GM12878 (cell line): ENCODE measurements at regions of chr7 and their contacts with region 1.

Region 1: DNA sequence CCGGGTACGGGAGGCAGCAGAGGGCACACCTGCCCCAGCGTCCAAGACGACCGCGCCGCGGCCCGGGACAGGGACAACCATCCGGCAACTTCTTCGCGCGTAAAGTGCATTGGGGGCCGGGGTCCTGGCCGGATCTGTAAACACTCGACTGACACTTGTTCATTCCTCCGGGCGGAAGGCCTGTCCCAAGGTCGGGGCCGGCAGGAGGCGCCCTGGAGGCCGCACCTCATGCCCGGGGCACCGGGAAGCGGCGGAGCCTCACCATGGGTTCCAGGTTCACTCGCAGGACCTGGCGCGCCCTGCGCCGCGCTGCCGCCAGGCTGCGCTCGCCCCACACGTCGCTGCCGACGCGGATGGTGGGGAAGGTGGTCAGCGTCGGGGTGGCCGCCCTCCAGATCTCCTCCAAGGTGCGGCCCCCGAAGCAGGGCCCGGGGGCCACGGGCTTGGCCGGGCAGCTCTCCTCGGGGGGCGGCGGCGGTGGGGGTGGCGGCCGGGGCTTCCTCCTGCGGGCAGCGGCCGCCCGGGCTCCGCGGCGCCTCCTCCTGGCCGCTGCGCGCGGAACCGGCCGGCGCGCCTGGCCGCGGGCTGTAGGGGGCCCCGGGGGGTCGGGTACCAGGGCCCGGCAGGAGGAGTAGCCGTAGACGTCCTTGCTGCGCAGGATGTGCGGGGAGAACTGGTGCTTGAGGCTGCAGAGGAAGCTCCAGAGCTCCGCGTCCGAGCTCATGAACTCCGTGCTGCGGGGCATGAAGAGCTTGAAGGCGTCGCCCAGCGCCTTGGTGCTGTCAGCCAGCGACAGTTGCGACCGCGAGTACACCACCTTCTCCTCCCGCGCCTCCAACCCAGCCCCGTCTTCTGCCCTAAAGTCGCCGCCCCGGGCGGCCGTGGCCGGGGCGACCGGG is 746 bp downstream of the CCDC71L start:
- DNase-seq: peak; percentile 51
- ATAC-seq: peak; percentile 79
- H3K4me3 ChIP-seq: peak overlapping the region; percentile 96
- H3K27ac ChIP-seq: peak overlapping the region; percentile 72
- H3K4me1 ChIP-seq: peaks cover 9% of the 10 kb centered on the region; the same call in 1 of the 2 replicates
- H3K27me3 ChIP-seq: no peaks in the 10 kb centered on the region; a peak in 1 of 4 replicates
- CTCF ChIP-seq: peak; percentile 78 to 94 (median 89)
- EP300 ChIP-seq: 0 out of 4 replicates have a peak, but pooled peaks of 1 of the 2 experiments have one; percentile 37
- POLR2A ChIP-seq: peak; percentile 78
- RAD21 ChIP-seq: peak; percentile 76

Region 2: DNA sequence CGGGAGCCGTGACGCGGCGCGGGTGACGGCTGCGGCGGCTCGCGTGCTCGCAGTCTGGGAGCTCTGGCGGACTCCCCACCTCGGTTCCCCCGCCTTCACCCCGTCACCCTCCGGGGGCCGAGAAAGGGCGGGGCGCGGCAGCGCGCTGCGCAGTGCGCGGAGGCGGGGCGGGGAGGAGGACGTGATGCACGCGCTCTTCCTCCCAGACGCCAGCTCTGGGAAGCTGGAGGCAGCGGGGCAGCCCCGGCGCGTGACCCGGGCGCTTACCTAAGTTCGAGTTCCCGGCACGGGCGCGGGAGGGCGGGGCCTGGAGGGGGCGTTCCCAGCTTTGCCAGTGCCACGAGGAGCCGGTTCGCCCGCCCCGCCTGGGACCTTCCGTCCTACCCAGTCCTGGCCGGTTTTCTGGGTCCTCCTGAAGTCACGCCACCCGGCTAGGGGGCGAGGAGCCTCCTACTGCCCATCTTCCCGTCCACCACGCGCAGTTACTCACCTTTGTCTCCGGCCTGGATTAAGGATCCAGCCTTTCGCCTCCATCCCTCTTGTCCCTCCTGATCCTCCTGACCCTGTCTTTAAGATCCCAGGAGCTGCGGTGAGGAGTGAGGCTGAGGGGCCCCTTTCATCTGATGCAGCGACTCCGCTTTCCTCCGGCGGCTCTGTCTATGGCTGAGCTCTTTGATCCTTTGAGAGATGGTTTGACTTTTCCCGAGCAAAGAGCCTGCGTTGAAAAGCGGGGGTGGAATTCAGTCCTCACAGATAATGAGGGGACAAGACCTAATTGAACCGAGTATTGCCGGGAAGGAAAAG is 375.0 kb before region 1 on chr7:
- CTCF ChIA-PET with region 1: no interaction called
- POLR2A ChIA-PET with region 1: no interaction called
- RAD21 ChIA-PET with region 1: no interaction called
- SMC1A ChIA-PET with region 1: no interaction called
- in situ Hi-C with region 1: no loop called
- intact Hi-C with region 1: loop called (anchors 2 kb)
- DNase-seq: peak; percentile 97
- ATAC-seq: peak; percentile 77
- H3K4me3 ChIP-seq: peak overlapping the region; percentile 99
- H3K27ac ChIP-seq: peak overlapping the region; percentile 100
- H3K4me1 ChIP-seq: peaks cover 3% of the 10 kb centered on the region
- H3K27me3 ChIP-seq: no peaks in the 10 kb centered on the region
- CTCF ChIP-seq: no peak
- EP300 ChIP-seq: peak; percentile 42 to 52; a peak in 2 of 4 replicates
- POLR2A ChIP-seq: peak; percentile 78
- RAD21 ChIP-seq: no peak

Region 3: GRCh38 chr7:106476751-106477150 is 183.5 kb before region 1 on chr7:
- CTCF ChIA-PET with region 1: no interaction called
- POLR2A ChIA-PET with region 1: no interaction called
- RAD21 ChIA-PET with region 1: no interaction called
- SMC1A ChIA-PET with region 1: no interaction called
- in situ Hi-C with region 1: no loop called
- intact Hi-C with region 1: no loop called
- DNase-seq: no peak
- ATAC-seq: no peak
- H3K4me3 ChIP-seq: no peak overlapping the region
- H3K27ac ChIP-seq: no peak overlapping the region
- H3K4me1 ChIP-seq: peaks cover 8% of the 10 kb centered on the region
- H3K27me3 ChIP-seq: no peaks in the 10 kb centered on the region
- CTCF ChIP-seq: no peak
- EP300 ChIP-seq: no peak
- POLR2A ChIP-seq: no peak
- RAD21 ChIP-seq: no peak

Region 4: GRCh38 chr7:106552645-106553445 is 107.4 kb before region 1 on chr7:
- CTCF ChIA-PET with region 1: interaction called, 171 read pairs
- POLR2A ChIA-PET with region 1: interaction called, 3 read pairs
- RAD21 ChIA-PET with region 1: interaction called, 30 read pairs
- SMC1A ChIA-PET with region 1: interaction called, 17 read pairs
- in situ Hi-C with region 1: no loop called
- intact Hi-C with region 1: no loop called
- DNase-seq: peak; percentile 97
- ATAC-seq: peak; percentile 98
- H3K4me3 ChIP-seq: no peak overlapping the region
- H3K27ac ChIP-seq: peak overlapping the region; percentile 79
- H3K4me1 ChIP-seq: peaks cover 19% of the 10 kb centered on the region
- H3K27me3 ChIP-seq: no peaks in the 10 kb centered on the region
- CTCF ChIP-seq: no peak
- EP300 ChIP-seq: peak; percentile 97 to 100
- POLR2A ChIP-seq: no peak
- RAD21 ChIP-seq: no peak

Region 5: DNA sequence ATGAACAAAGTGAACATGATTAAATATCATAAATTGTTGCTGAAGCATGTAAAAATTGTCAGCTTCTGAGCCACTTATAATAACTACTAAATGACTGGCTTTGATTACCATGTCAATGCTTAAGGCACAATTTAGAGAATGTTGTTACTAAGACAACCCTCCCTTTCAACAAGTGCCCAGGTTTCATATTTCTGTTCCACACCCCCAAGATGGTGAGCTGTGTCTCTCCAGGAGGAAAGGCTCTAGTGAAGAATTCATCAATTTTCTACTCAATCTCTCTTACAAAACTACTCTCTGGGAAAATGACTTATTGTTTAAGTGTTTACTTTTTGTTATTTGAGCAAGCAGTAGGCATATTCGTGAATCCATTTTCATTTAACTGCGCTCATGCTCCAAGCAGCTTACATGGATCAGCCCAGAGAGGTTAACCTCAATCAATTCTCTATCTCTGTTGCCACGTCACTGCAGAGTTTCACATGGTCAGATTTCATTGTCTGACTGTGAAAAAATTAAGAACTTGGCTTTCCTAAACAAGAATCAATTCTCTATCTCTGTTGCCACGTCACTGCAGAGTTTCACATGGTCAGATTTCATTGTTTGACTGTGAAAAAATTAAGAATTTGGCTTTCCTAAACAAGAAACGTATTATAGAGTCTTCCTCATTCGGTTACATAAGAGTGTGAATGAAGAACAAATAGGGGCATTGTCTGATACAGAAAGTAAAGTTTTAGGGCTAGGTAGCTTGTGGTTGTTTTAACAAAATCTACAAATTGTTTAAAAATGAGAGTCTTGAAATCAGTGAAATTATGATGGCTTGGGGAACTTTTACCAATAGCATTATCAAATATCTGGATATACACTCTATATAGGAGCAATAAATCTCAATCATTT is 49.0 kb before region 1 on chr7:
- CTCF ChIA-PET with region 1: no interaction called
- POLR2A ChIA-PET with region 1: no interaction called
- RAD21 ChIA-PET with region 1: no interaction called
- SMC1A ChIA-PET with region 1: interaction called, 4 read pairs
- in situ Hi-C with region 1: no loop called
- intact Hi-C with region 1: loop called (anchors 2 kb)
- DNase-seq: peak; percentile 42
- ATAC-seq: peak; percentile 92
- H3K4me3 ChIP-seq: no peak overlapping the region
- H3K27ac ChIP-seq: no peak overlapping the region
- H3K4me1 ChIP-seq: no peaks in the 10 kb centered on the region
- H3K27me3 ChIP-seq: no peaks in the 10 kb centered on the region
- CTCF ChIP-seq: no peak
- EP300 ChIP-seq: peak; percentile 87 to 94; a peak in 3 of 4 replicates
- POLR2A ChIP-seq: no peak
- RAD21 ChIP-seq: no peak

Region 6: GRCh38 chr7:106717955-106718871 is 58.0 kb after region 1 on chr7:
- CTCF ChIA-PET with region 1: interaction called, 6 read pairs
- POLR2A ChIA-PET with region 1: interaction called, 3 read pairs
- RAD21 ChIA-PET with region 1: interaction called, 12 read pairs
- SMC1A ChIA-PET with region 1: interaction called, 7 read pairs
- in situ Hi-C with region 1: no loop called
- intact Hi-C with region 1: no loop called
- DNase-seq: peak; percentile 81
- ATAC-seq: peak; percentile 96
- H3K4me3 ChIP-seq: no peak overlapping the region
- H3K27ac ChIP-seq: peak overlapping the region; percentile 54
- H3K4me1 ChIP-seq: peaks cover 41% of the 10 kb centered on the region
- H3K27me3 ChIP-seq: no peaks in the 10 kb centered on the region
- CTCF ChIP-seq: no peak
- EP300 ChIP-seq: peak; percentile 68 to 87; a peak in 3 of 4 replicates
- POLR2A ChIP-seq: no peak
- RAD21 ChIP-seq: peak; percentile 22; the same call in 1 of the 2 replicates

Region 7: DNA sequence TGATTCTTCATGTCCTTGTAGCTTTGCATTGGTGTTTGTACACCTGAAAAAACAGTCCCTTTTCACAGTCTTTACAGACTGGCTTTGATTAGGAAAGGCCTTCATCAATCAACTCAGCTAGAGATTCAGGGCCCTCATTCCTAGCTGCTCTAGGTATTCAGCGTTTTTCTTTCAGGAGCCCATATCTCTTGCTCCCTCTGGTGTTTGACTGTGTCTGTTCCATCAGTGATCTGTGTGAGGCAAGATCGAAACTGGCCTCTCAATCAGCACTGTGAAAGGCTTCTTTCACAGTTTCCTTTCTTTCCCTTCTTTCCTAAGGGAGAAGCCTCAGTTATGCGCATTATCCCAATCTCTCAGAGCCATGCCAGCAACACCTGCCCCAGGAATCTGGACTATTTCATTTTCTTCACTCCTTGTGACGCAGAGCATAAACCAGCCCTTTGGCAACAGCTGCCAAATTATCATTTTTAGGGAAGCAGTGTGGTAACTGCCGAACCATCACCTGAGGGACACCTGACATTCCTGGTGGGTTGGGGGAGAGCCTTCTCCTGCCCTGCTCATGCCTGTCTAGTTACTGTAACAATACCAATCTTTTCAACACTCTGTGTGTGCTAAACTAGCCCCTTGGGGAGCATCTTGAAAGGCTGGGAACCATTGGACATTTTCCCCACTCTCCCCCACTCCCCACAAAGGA is 76.4 kb after region 1 on chr7:
- CTCF ChIA-PET with region 1: interaction called, 151 read pairs
- POLR2A ChIA-PET with region 1: interaction called, 11 read pairs
- RAD21 ChIA-PET with region 1: interaction called, 67 read pairs
- SMC1A ChIA-PET with region 1: interaction called, 115 read pairs
- in situ Hi-C with region 1: loop called (anchors 5 kb)
- intact Hi-C with region 1: loop called (anchors 1 kb)
- DNase-seq: peak; percentile 48
- ATAC-seq: peak; percentile 98
- H3K4me3 ChIP-seq: no peak overlapping the region
- H3K27ac ChIP-seq: no peak overlapping the region
- H3K4me1 ChIP-seq: peaks cover 15% of the 10 kb centered on the region
- H3K27me3 ChIP-seq: no peaks in the 10 kb centered on the region
- CTCF ChIP-seq: peak; percentile 75 to 86 (median 80)
- EP300 ChIP-seq: no peak
- POLR2A ChIP-seq: no peak
- RAD21 ChIP-seq: peak; percentile 97

Region 8: DNA sequence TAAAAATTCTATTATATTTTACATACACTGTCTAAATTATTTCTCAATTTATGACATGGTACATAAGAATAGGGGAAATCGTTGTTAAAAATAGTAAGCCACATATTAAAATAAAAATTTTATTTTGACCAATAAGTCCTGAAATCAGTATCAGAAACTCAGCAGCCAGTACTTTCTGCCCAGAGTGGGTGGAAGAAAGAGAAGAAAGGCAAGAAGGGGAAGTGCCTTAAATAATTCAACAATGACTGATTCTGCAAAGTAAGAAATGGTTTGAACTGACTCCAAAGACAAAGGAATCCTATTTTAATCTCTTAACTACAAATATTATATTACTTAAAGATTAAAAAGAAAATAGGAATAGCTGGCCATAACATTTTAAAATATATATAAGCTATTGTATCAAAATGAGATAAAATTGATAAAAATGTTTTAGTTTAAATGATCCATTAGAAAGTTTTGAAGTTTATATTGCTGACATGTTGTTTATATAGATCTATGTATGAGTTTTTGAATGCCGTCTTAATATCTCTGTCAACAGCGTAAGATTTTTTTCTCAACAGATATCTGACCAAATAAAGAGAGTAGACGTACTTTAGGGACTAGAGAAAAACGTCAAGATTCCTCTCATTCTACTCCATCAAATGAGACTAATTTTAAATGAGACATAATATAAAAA is 1826.2 kb after region 1 on chr7:
- CTCF ChIA-PET with region 1: no interaction called
- POLR2A ChIA-PET with region 1: no interaction called
- RAD21 ChIA-PET with region 1: no interaction called
- SMC1A ChIA-PET with region 1: no interaction called
- in situ Hi-C with region 1: no loop called
- intact Hi-C with region 1: no loop called
- DNase-seq: no peak
- ATAC-seq: peak; percentile 34; the same call in 1 of the 3 replicates
- H3K4me3 ChIP-seq: no peak overlapping the region
- H3K27ac ChIP-seq: no peak overlapping the region
- H3K4me1 ChIP-seq: no peaks in the 10 kb centered on the region
- H3K27me3 ChIP-seq: no peaks in the 10 kb centered on the region
- CTCF ChIP-seq: no peak
- EP300 ChIP-seq: no peak
- POLR2A ChIP-seq: no peak
- RAD21 ChIP-seq: no peak